ENCODE measurements at regions of chr1 and their contacts with region 1.

Region 1: GRCh38 chr1:93680757-93681550 is 683 bp downstream of the BCAR3 start:
- DNase-seq: peak; percentile 86 to 92
- ATAC-seq: peak; percentile 91
- H3K4me3 ChIP-seq: peak overlapping the region; percentile 57 to 79
- H3K27ac ChIP-seq: peak overlapping the region; percentile 43 to 73
- H3K4me1 ChIP-seq: no peaks in the 10 kb centered on the region
- H3K27me3 ChIP-seq: no peaks in the 10 kb centered on the region

Region 2: DNA sequence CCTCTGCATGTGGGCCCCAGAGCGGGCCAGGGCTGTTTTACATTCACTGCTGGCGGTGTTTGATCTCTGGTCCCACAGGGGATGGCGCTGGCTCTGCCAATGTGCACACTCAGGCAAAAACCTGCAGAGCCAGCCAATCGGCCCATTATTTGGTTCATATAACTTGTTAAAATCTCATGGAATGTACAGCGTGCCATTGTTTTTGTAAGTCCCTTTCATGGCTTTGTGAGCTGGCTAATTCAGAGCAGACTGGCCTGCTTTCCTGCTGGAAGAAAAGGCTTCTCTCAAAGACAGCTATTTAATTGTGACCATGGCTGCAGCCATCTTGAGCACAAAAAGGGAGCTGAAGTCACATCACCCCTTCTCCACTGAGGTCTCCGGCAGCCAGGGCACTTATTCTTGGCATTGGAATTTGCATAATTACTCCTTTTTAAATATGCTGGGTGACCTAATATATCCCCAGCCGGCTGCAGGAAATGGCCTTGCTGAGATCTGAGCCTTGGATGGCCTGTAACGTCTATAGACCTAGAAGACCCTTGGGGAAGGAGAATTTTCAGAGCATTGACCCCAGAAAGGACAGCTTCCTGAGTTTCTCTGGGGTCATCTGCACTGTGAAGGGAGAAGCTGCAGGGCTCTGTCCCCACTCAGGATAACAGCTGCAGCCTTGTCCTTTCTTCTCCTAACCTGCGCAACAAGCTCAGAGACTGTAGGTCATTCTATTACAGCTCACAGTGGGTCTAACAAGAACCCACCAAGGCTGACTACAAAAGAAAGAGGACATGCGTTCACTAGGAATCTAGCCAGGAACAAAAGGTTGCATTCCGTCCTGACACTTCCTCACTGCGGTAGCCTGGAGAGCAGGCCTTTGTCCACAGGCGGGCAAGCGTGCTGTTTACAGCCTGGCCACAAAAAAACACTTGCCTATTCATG is 45.1 kb before region 1 on chr1:
- intact Hi-C with region 1: loop called (anchors 5 kb)
- DNase-seq: no peak
- ATAC-seq: no peak
- H3K4me3 ChIP-seq: no peak overlapping the region
- H3K27ac ChIP-seq: no peak overlapping the region
- H3K4me1 ChIP-seq: peaks cover under 1 to 9% of the 10 kb centered on the region in 2 donors
- H3K27me3 ChIP-seq: no peaks in the 10 kb centered on the region

Region 3: DNA sequence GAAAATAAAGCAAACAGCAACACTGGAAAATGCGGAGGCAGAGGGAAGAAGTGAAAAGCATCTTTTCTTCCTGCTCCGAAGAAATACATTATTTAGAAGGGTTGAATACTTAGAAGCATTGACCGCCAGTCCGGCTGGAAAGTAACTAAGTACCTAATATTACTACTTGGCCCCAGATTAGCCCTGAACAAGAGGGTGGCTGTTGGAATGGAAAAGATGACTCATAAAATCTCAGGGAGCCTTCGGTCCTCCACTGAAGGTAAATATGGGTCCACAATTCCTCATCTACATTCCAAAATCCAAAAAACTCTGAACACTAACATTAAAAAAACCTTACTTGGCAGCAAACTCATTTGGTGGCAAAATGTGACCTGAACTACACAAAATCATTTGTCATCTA is 39.4 kb before region 1 on chr1:
- intact Hi-C with region 1: loop called (anchors 5 kb)
- DNase-seq: no peak
- ATAC-seq: peak; percentile 76
- H3K4me3 ChIP-seq: no peak overlapping the region
- H3K27ac ChIP-seq: peak overlapping the region in 1 of 2 donors; percentile 60
- H3K4me1 ChIP-seq: peaks cover 3 to 15% of the 10 kb centered on the region in 2 donors
- H3K27me3 ChIP-seq: no peaks in the 10 kb centered on the region

Region 4: DNA sequence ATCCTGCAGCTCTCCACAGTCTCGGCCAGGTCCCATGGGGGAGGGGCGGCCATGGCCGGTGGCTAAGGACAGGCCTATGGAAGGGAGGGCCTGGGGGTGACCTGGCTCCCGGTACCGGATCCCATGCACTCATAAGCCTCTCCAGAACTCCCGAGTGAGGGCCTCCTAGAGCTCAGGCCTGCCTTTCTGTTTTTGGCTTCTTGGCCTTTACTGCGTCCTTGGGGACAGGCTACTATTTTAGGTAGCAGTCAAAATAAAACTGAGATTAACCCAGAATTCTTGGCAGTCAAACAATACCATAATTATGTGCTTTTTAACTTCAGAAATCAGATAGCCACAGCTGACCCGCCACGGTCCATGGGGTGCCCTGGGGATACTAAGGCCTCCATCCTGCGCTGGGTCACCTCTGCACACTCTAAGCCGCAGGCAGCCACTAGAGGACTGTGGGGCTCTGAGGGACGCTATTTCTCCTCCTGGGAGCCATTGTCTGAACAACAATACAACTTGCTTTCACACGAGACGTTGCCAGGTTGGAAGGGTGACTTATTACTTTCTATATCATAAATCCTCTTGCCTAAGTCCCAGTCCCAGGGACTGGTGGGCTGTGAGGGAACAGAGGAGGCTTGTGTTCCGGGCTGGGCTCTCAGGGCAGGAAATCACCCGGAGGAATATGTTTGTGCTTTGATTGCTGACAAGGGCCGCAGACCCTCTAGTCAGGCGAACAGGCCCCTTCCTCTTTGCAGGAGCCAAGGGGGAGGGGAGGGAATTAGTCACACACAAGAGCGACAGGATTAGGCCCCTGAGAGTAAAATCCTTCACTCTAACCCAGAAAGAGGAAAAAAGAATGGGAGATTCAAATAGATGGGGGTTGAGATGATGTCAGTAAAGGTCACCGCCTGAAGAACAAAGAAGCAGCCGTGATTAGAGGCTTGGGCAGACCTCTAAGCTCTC is 41.4 kb after region 1 on chr1:
- intact Hi-C with region 1: loop called in 1 of 2 experiments (anchors 5 kb)
- DNase-seq: peak in 1 of 2 donors; percentile 70
- ATAC-seq: peak; percentile 85
- H3K4me3 ChIP-seq: no peak overlapping the region
- H3K27ac ChIP-seq: peak overlapping the region; percentile 4 to 75
- H3K4me1 ChIP-seq: peaks cover 4 to 8% of the 10 kb centered on the region in 2 donors
- H3K27me3 ChIP-seq: no peaks in the 10 kb centered on the region